ENCODE measurements at regions of chr5 and their contacts with region 1.

Region 1: GRCh38 chr5:151825445-151825844 is 53.7 kb downstream of the G3BP1 start:
- DNase-seq: peak; percentile 38
- ATAC-seq: peak; percentile 76
- H3K4me3 ChIP-seq: no peak overlapping the region
- H3K27ac ChIP-seq: no peak overlapping the region
- H3K4me1 ChIP-seq: no peaks in the 10 kb centered on the region; the same call in 1 of the 2 replicates
- H3K27me3 ChIP-seq: no peaks in the 10 kb centered on the region
- CTCF ChIP-seq: peak; percentile 86

Region 2: GRCh38 chr5:151659001-151659754 is 166.3 kb before region 1 on chr5:
- CTCF ChIA-PET with region 1: no interaction called
- POLR2A ChIA-PET with region 1: no interaction called
- in situ Hi-C with region 1: no loop called
- intact Hi-C with region 1: no loop called
- DNase-seq: peak; percentile 47
- ATAC-seq: peak; percentile 95
- H3K4me3 ChIP-seq: no peak overlapping the region
- H3K27ac ChIP-seq: peak overlapping the region; percentile 83
- H3K4me1 ChIP-seq: peaks cover 21% of the 10 kb centered on the region
- H3K27me3 ChIP-seq: no peaks in the 10 kb centered on the region
- CTCF ChIP-seq: peak; percentile 94

Region 3: DNA sequence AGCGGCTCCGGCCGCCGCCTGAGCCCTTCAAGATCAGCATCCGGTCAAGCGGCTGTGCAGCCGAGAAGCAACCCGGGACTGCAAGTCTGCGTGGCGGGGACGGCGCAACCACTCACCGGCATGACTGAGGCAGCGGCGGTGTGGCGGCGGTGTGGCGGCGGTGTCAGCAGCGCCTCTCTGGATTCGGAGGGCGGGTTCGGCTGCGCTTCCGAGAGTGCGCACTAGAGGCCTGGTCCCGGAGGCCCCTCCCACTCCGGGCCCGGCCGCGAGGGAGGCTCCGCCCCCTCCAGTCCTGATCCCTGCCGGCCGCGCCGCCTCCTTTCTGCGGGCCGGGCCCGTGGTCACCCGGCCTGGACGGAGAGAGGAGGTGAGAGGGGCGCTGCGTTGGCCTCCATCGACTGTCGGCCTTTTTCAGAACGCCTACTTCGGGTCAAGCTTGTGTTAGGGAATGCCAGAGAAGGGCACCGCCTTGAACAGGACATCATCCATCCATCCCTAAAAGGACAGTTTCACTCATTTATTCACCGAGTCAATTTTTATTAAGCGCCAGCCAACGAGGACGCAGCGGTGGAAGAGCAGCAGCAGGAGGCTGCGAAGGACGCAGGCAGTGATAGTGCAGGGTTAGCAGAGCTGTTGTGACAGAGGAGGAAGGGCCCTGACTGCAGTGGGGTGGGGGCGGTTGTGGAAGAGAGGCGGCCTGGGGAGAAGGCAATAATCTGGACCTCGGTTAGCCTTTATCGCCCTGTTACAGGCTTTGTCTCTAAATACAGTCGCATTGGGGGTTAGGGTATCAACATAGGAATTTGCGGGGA is 66.8 kb before region 1 on chr5 and contains the start of gene ATOX1:
- CTCF ChIA-PET with region 1: no interaction called
- POLR2A ChIA-PET with region 1: no interaction called
- in situ Hi-C with region 1: no loop called
- intact Hi-C with region 1: no loop called
- DNase-seq: no peak
- ATAC-seq: peak; percentile 99
- H3K4me3 ChIP-seq: peak within 1 kb of the TSS; percentile 85 to 88
- H3K27ac ChIP-seq: peak within 1 kb of the TSS; percentile 88
- H3K4me1 ChIP-seq: peaks cover 18% of the 10 kb centered on the region
- H3K27me3 ChIP-seq: no peaks in the 10 kb centered on the region
- CTCF ChIP-seq: no peak
- total RNA-seq, gene ATOX1: 202 TPM

Region 4: GRCh38 chr5:151961557-151961956 is 136.1 kb after region 1 on chr5:
- CTCF ChIA-PET with region 1: no interaction called
- POLR2A ChIA-PET with region 1: no interaction called
- in situ Hi-C with region 1: no loop called
- intact Hi-C with region 1: no loop called
- DNase-seq: no peak
- ATAC-seq: no peak
- H3K4me3 ChIP-seq: no peak overlapping the region
- H3K27ac ChIP-seq: no peak overlapping the region
- H3K4me1 ChIP-seq: no peaks in the 10 kb centered on the region
- H3K27me3 ChIP-seq: no peaks in the 10 kb centered on the region
- CTCF ChIP-seq: no peak

Region 5: GRCh38 chr5:152142840-152143469 is 317.5 kb after region 1 on chr5:
- CTCF ChIA-PET with region 1: interaction called, 8 read pairs
- POLR2A ChIA-PET with region 1: no interaction called
- in situ Hi-C with region 1: no loop called
- intact Hi-C with region 1: loop called (anchors 1 kb)
- DNase-seq: peak; percentile 39
- ATAC-seq: peak; percentile 90
- H3K4me3 ChIP-seq: no peak overlapping the region
- H3K27ac ChIP-seq: no peak overlapping the region
- H3K4me1 ChIP-seq: no peaks in the 10 kb centered on the region
- H3K27me3 ChIP-seq: no peaks in the 10 kb centered on the region
- CTCF ChIP-seq: peak; percentile 92

Region 6: GRCh38 chr5:152349683-152350526 is 524.5 kb after region 1 on chr5:
- CTCF ChIA-PET with region 1: no interaction called
- POLR2A ChIA-PET with region 1: no interaction called
- in situ Hi-C with region 1: no loop called
- intact Hi-C with region 1: loop called (anchors 1 kb)
- DNase-seq: peak; percentile 27
- ATAC-seq: peak; percentile 77
- H3K4me3 ChIP-seq: no peak overlapping the region
- H3K27ac ChIP-seq: no peak overlapping the region
- H3K4me1 ChIP-seq: no peaks in the 10 kb centered on the region
- H3K27me3 ChIP-seq: no peaks in the 10 kb centered on the region
- CTCF ChIP-seq: peak; percentile 87

Region 7: GRCh38 chr5:152505442-152506042 is 680.1 kb after region 1 on chr5:
- CTCF ChIA-PET with region 1: no interaction called
- POLR2A ChIA-PET with region 1: no interaction called
- in situ Hi-C with region 1: no loop called
- intact Hi-C with region 1: loop called (anchors 10 kb)
- DNase-seq: peak; percentile 25
- ATAC-seq: peak; percentile 93
- H3K4me3 ChIP-seq: no peak overlapping the region
- H3K27ac ChIP-seq: no peak overlapping the region
- H3K4me1 ChIP-seq: no peaks in the 10 kb centered on the region
- H3K27me3 ChIP-seq: no peaks in the 10 kb centered on the region
- CTCF ChIP-seq: peak; percentile 76